ENCODE measurements at regions of chr16 and their contacts with region 1.

Region 1: GRCh38 chr16:50037662-50038220 is 12.7 kb downstream of the CNEP1R1 start:
- DNase-seq: no peak
- H3K4me3 ChIP-seq: no peak overlapping the region
- H3K4me3 Mint-ChIP-seq: peak overlapping the region; percentile 2
- H3K27ac Mint-ChIP-seq: no peak overlapping the region
- H3K4me1 ChIP-seq: peaks cover 58% of the 10 kb centered on the region
- H3K4me1 Mint-ChIP-seq: peaks cover 33% of the 10 kb centered on the region
- H3K27me3 ChIP-seq: no peaks in the 10 kb centered on the region
- H3K27me3 Mint-ChIP-seq: no peaks in the 10 kb centered on the region
- CTCF ChIP-seq: no peak

Region 2: DNA sequence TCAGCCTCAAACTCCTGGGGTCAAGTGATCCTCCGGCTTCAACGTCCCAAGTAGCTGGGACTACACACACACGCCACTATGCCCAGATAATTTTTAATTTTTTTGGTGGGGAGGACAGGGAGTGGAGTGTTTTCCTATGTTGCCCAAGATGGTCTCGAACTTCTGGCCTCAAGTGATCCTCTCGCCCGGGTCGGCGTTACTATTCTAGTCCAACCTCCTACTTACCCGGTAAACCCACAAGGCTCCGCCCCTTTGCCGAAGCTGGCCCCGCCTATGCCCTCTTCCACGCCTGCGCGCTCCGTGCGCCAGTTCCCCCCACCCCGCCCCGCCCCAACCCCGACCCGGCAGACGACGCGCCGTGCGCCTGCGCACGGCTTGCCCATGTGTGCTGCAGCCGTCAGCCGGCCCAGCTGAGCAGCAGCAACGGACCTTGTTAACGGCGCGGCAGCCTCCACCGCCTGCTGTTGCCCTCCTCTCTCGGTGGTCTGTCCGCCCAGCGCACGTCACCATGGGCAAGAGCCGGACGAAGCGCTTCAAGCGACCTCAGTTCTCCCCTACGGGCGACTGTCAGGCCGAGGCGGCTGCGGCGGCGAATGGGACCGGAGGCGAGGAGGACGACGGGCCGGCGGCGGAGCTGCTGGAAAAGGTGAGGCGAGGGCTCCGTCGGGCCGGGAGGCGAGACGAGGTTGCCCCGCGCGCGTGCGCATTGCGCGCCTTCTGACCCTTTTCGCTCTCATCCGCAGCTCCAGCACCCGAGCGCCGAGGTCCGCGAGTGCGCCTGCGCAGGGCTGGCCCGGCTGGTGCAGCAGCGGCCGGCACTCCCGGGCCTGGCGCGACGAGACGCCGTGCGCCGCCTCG is 28.1 kb after region 1 on chr16 and contains the start of gene HEATR3:
- CTCF ChIA-PET with region 1: interaction called, 3 read pairs
- POLR2A ChIA-PET with region 1: no interaction called
- intact Hi-C with region 1: loop called (anchors 1 kb)
- DNase-seq: peak; percentile 96 to 97
- H3K4me3 ChIP-seq: peak within 1 kb of the TSS; percentile 86
- H3K4me3 Mint-ChIP-seq: peak within 1 kb of the TSS; percentile 94
- H3K27ac Mint-ChIP-seq: peak within 1 kb of the TSS; percentile 88
- H3K4me1 ChIP-seq: 0 out of 2 replicates have a peak, but pooled peaks cover 3% of the 10 kb centered on the region
- H3K4me1 Mint-ChIP-seq: peaks cover 19% of the 10 kb centered on the region
- H3K27me3 ChIP-seq: no peaks in the 10 kb centered on the region
- H3K27me3 Mint-ChIP-seq: no peaks in the 10 kb centered on the region
- CTCF ChIP-seq: no peak
- total RNA-seq, gene HEATR3: 41.6 and 42.8 TPM in 2 replicates

Region 3: DNA sequence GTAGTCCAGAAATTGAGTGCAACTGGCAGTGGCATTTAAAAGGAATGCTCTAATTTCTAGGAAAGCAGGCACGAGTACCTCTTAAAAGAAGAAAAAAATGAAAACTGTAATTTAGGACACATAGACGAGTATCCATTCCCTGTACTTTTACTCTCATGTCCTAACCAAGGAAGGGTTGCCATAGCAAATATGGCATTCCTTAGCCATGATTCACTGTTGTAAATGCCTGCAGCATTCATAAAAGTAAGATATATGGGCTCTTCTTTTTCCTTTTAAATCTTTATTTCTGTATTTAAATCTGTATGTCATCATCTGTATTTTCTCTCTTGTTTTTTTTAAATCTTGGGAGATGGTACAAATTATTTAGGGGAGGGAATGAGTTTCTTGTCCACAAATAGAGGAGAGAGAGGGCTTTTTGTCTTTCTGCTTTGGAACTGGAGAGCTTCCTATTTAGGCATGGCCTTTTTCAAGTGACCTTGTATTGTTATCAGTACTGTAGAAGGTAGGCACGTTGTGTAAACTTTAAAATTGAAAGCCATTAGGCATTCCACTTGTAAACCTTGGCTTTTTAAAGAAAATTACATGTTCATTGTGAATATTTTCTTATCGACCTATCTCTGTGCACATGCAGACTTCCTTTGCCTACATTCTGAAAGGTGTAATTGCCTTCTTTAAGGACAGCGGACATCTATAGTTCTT is 165.3 kb after region 1 on chr16:
- CTCF ChIA-PET with region 1: no interaction called
- POLR2A ChIA-PET with region 1: no interaction called
- intact Hi-C with region 1: no loop called
- DNase-seq: peak; percentile 52 to 77
- H3K4me3 ChIP-seq: no peak overlapping the region
- H3K4me3 Mint-ChIP-seq: peak overlapping the region; percentile 23
- H3K27ac Mint-ChIP-seq: peak overlapping the region; percentile 94
- H3K4me1 ChIP-seq: peaks cover 42% of the 10 kb centered on the region
- H3K4me1 Mint-ChIP-seq: peaks cover 34% of the 10 kb centered on the region
- H3K27me3 ChIP-seq: no peaks in the 10 kb centered on the region
- H3K27me3 Mint-ChIP-seq: no peaks in the 10 kb centered on the region
- CTCF ChIP-seq: no peak